Activated B cell treated with CpG ODN at 0.5 μM for 24 hours (primary cell): ENCODE measurements at regions of chr15 and their contacts with region 1.

Region 1: GRCh38 chr15:81286621-81287121 is 37.3 kb downstream of the STARD5 start:
- DNase-seq: no peak
- ATAC-seq: peak; percentile 80
- H3K4me3 Mint-ChIP-seq: peak overlapping the region; percentile 80
- H3K27ac Mint-ChIP-seq: peak overlapping the region; percentile 96
- H3K4me1 Mint-ChIP-seq: peaks cover 76% of the 10 kb centered on the region
- H3K27me3 Mint-ChIP-seq: no peaks in the 10 kb centered on the region
- CTCF ChIP-seq: no peak

Region 2: DNA sequence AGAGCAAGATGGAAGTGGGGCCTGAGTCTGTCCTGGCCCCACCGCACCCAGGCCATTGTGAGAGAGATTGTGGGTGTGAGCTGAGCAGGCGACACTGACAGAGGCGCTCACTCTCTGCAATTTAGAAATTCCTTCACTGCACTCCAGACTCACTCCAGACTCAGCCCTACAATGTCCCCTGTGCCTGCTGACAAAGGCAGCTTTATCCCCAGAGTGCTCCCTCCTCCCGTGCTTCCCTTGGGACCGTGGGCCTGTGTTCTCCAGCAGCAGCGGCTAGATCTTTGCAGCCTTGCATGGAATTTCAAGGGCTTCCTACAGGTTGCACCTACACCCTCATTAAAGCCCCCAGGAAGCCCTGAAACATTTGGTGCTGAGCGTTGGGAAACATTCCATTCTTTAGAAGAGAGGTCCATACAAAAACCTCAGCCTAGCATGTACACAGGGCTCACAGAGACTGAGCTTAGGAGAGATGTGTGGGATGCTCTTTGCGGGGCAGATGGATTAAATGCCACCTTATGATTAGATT is 91.3 kb before region 1 on chr15:
- CTCF ChIA-PET with region 1: no interaction called
- POLR2A ChIA-PET with region 1: no interaction called
- intact Hi-C with region 1: no loop called
- DNase-seq: no peak
- ATAC-seq: no peak
- H3K4me3 Mint-ChIP-seq: no peak overlapping the region
- H3K27ac Mint-ChIP-seq: no peak overlapping the region
- H3K4me1 Mint-ChIP-seq: no peaks in the 10 kb centered on the region
- H3K27me3 Mint-ChIP-seq: peaks cover 10% of the 10 kb centered on the region
- CTCF ChIP-seq: no peak

Region 3: DNA sequence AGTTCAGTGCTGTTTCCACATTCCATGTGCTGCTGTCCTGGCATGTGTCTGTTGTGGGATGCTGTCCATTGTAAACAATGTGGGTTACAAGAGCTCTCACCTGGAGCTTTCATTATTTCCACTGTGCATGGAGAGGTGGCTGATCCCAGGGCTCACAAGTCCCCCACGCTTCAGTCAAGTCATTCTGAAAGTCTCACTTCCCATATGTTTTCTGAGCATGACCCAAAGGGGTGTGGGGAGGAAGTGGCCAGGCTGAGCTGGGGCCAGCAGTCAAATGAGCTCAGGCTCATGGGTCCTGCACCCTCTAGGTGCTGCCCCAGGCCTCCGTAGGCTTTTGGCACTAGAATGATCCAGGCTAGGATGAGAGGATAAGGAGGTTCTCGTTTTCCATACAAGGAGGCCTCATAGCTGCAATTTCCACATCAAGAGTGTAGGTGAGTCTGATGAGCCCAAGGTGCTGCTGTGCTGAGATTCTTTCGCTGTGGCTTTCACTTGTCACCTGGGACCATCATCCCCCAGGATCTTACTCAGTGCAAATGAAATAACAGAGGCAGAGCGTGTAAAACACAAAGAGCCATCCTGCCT is 15.2 kb after region 1 on chr15:
- CTCF ChIA-PET with region 1: interaction called, 12 read pairs
- POLR2A ChIA-PET with region 1: interaction called, 631 read pairs
- intact Hi-C with region 1: loop called (anchors 2 kb)
- DNase-seq: peak; percentile 56
- ATAC-seq: peak; percentile 74
- H3K4me3 Mint-ChIP-seq: peak overlapping the region; percentile 99
- H3K27ac Mint-ChIP-seq: peak overlapping the region; percentile 99
- H3K4me1 Mint-ChIP-seq: peaks cover 96% of the 10 kb centered on the region
- H3K27me3 Mint-ChIP-seq: no peaks in the 10 kb centered on the region
- CTCF ChIP-seq: no peak

Region 4: GRCh38 chr15:81312790-81313543 is 26.3 kb after region 1 on chr15:
- CTCF ChIA-PET with region 1: interaction called, 3 read pairs
- POLR2A ChIA-PET with region 1: interaction called, 631 read pairs
- intact Hi-C with region 1: no loop called
- DNase-seq: no peak
- ATAC-seq: no peak
- H3K4me3 Mint-ChIP-seq: peak overlapping the region; percentile 50
- H3K27ac Mint-ChIP-seq: peak overlapping the region; percentile 94
- H3K4me1 Mint-ChIP-seq: peaks cover 88% of the 10 kb centered on the region
- H3K27me3 Mint-ChIP-seq: no peaks in the 10 kb centered on the region
- CTCF ChIP-seq: no peak

Region 5: GRCh38 chr15:81323944-81324881 is 37.5 kb after region 1 on chr15 and contains the start of gene STARD5:
- CTCF ChIA-PET with region 1: no interaction called
- POLR2A ChIA-PET with region 1: interaction called, 73 read pairs
- intact Hi-C with region 1: loop called (anchors 1 kb)
- DNase-seq: peak; percentile 89
- ATAC-seq: peak; percentile 99
- H3K4me3 Mint-ChIP-seq: peak within 1 kb of the TSS; percentile 97
- H3K27ac Mint-ChIP-seq: peak within 1 kb of the TSS; percentile 80
- H3K4me1 Mint-ChIP-seq: peaks cover 35% of the 10 kb centered on the region
- H3K27me3 Mint-ChIP-seq: no peaks in the 10 kb centered on the region
- CTCF ChIP-seq: no peak
- total RNA-seq, gene STARD5: 10.5 and 14.3 TPM in 2 replicates

Region 6: DNA sequence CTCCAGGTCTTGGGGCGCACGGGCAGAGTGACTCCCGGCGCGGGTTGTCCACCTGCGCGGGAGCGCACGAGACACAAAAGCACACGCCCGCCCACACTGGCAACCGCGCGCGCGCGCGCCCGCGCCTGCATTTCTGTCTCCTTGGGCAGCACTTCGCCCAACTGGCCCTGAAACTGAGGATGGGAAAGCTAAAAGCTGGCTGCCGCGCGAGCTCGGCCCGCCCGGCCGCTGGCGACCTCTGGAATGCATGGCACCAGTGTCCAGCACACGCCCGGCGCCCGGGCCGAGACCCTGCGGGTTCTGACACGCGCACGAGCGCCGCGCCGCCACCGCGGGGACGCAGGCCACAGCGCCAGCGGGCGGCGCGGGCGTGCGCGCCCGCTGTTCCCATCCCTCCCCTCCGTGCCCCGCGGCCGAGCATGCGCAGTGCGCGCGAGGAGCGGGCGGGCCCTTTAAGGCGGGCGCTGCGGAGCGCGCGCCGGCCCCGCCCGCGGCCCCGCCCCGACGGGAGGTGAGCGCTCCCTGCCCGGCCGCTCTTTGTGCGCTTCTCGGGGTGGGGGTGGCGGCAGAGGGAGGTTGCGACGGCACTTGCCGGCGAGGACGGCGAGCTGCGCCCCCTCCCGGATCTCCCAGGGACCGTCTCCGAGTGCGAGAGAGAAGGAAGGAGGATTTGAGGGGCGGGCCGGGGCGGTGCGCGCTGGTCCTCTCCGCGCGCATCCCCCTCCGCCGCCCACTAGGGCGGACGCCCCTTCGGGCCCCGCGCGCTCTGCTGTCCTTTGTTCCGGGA is 760.2 kb after region 1 on chr15:
- CTCF ChIA-PET with region 1: no interaction called
- POLR2A ChIA-PET with region 1: no interaction called
- intact Hi-C with region 1: loop called (anchors 5 kb)
- DNase-seq: peak; percentile 84
- ATAC-seq: peak; percentile 81
- H3K4me3 Mint-ChIP-seq: peak overlapping the region; percentile 89
- H3K27ac Mint-ChIP-seq: peak overlapping the region; percentile 66
- H3K4me1 Mint-ChIP-seq: peaks cover 16% of the 10 kb centered on the region
- H3K27me3 Mint-ChIP-seq: peaks cover 27% of the 10 kb centered on the region
- CTCF ChIP-seq: no peak